AG04449 (cell line): ENCODE measurements at regions of chr5 and their contacts with region 1.

Region 1: GRCh38 chr5:52922386-52922785 is 66.8 kb upstream of the ITGA2 start:
- DNase-seq: peak; percentile 74
- H3K4me3 ChIP-seq: no peak overlapping the region
- CTCF ChIP-seq: no peak

Region 2: DNA sequence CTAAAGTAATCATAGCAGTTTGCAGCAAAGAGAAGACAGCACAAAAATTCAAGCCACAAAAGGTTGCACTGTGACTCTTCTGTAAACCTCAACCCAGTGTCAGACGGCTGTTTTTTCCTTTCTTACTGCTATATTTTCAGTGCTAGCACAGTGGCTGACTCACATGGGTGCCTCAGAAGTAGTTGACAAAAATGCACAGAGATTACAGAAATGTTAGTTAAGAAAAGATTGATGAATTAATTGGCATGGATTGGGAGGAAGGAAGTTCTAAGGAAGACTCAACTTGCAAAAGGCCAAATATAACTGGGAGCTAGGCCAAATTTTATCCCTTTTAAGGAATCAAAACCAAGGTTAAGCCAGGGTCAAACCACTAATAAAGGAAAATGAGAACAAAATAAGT is 178.4 kb before region 1 on chr5:
- CTCF ChIA-PET with region 1: no interaction called
- POLR2A ChIA-PET with region 1: no interaction called
- DNase-seq: no peak
- H3K4me3 ChIP-seq: no peak overlapping the region
- CTCF ChIP-seq: no peak

Region 3: GRCh38 chr5:53089345-53089991 is 167.1 kb after region 1 on chr5:
- CTCF ChIA-PET with region 1: interaction called, 14 read pairs
- POLR2A ChIA-PET with region 1: no interaction called
- DNase-seq: no peak
- H3K4me3 ChIP-seq: no peak overlapping the region
- CTCF ChIP-seq: no peak

Region 4: GRCh38 chr5:53095931-53096525 is 173.6 kb after region 1 on chr5:
- CTCF ChIA-PET with region 1: interaction called, 22 read pairs
- POLR2A ChIA-PET with region 1: no interaction called
- DNase-seq: no peak
- H3K4me3 ChIP-seq: no peak overlapping the region
- CTCF ChIP-seq: peak; percentile 65